ENCODE measurements at regions of chr19 and their contacts with region 1.

Region 1: GRCh38 chr19:41353466-41354342 is at the start of gene TGFB1:
- DNase-seq: no peak
- H3K4me3 ChIP-seq: peak within 1 kb of the TSS; percentile 87
- CTCF ChIP-seq: peak; percentile 98

Region 2: GRCh38 chr19:41321600-41322270 is 32.0 kb before region 1 on chr19:
- CTCF ChIA-PET with region 1: interaction called, 23 read pairs
- POLR2A ChIA-PET with region 1: interaction called, 8 read pairs
- DNase-seq: no peak
- H3K4me3 ChIP-seq: no peak overlapping the region
- CTCF ChIP-seq: peak; percentile 72

Region 3: GRCh38 chr19:41334793-41335192 is 18.9 kb before region 1 on chr19:
- CTCF ChIA-PET with region 1: interaction called, 13 read pairs
- POLR2A ChIA-PET with region 1: interaction called, 8 read pairs
- DNase-seq: no peak
- H3K4me3 ChIP-seq: no peak overlapping the region
- CTCF ChIP-seq: no peak

Region 4: GRCh38 chr19:41363753-41364523 is 10.2 kb after region 1 on chr19 and contains the start of gene B9D2:
- CTCF ChIA-PET with region 1: interaction called, 103 read pairs
- POLR2A ChIA-PET with region 1: interaction called, 29 read pairs
- DNase-seq: peak; percentile 87
- H3K4me3 ChIP-seq: peak within 1 kb of the TSS; percentile 98
- CTCF ChIP-seq: no peak

Region 5: DNA sequence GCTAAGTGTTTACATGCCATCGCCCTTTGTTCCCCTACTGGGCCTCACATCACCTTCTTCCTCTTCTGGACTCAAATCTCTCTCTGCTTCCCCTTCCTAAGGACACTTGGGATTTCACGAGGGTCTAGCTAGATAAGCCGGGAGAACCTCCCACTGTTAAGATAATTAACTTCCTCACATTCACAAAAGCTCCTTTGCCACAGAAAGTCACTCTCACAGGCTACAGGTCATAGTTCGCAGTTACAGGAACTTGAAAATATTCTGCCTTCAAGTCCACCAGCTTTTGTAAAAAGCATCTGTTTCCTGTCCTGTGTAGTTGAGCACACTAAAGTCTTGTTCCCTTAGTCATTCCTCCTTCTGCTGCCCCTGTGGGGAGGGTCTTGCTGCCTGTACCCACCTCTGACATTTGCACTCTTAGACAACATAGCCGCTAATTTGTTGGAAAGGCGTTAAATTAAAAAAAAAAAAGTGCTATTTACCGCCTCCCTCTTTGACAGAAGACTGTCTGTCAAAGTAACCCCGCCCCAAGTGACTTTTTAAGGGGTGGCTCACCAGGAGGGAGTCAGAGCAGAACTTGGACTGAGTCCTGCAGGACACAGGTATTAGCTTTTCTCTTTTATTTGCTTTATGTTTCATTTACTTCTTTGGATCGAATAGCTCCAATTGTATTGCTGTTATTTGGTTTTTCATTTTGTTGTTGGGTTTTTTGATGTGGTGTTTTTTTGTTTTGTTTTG is 195.4 kb after region 1 on chr19:
- CTCF ChIA-PET with region 1: no interaction called
- POLR2A ChIA-PET with region 1: no interaction called
- DNase-seq: no peak
- H3K4me3 ChIP-seq: no peak overlapping the region
- CTCF ChIP-seq: no peak

Measured in AG04449 (cell line).